Activated CD4-positive, alpha-beta T cell treated with anti-CD3 and anti-CD28 coated beads, Interleukin-2, amount 10 ng/mL, durations not matched to agents 7 days and 5 days (primary cell): ENCODE measurements at regions of chr22 and their contacts with region 1.

Region 1: DNA sequence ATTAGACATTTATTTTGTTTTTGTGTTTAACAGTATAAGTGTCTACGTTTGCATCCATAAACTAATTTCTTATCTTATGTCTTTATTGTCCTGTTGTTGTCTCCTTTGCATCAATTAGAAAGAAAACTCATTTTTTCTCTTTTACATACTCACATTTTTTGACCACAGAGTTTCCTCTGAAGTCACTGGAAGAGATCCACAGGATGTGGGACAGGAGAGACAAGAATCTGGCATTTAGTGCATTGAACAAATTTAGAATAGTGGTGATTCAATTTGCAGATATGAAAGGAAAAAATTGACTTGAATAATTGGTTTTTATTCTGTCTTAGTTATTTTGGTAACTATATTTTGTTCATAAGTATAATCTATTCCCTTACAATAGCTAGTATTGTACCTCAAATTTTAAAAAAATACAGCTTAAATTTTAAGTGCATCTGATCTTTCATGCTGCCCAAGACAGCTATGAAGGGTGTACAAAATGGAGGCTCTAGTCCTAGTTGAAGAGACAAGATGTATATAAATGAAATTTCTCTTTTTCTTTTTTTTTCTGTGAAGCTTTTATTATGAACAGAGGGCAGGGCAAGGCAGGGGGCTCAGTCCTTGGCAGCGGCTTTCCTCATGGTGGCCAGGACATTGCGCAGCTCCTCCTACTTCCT is 24.4 kb downstream of the HORMAD2 start:
- DNase-seq: peak; percentile 46
- H3K4me3 Mint-ChIP-seq: no peak overlapping the region
- H3K27ac Mint-ChIP-seq: peak overlapping the region; percentile 38
- H3K4me1 Mint-ChIP-seq: peaks cover 69% of the 10 kb centered on the region
- H3K27me3 Mint-ChIP-seq: no peaks in the 10 kb centered on the region

Region 2: GRCh38 chr22:30116362-30117117 is 11.9 kb after region 1 on chr22:
- CTCF ChIA-PET with region 1: interaction called, 12 read pairs
- POLR2A ChIA-PET with region 1: no interaction called
- DNase-seq: no peak
- H3K4me3 Mint-ChIP-seq: no peak overlapping the region
- H3K27ac Mint-ChIP-seq: no peak overlapping the region
- H3K4me1 Mint-ChIP-seq: peaks cover 37% of the 10 kb centered on the region
- H3K27me3 Mint-ChIP-seq: no peaks in the 10 kb centered on the region

Region 3: GRCh38 chr22:30245985-30246901 is 141.6 kb after region 1 on chr22 and contains the start of gene LIF:
- CTCF ChIA-PET with region 1: interaction called, 34 read pairs
- POLR2A ChIA-PET with region 1: no interaction called
- DNase-seq: peak; percentile 61
- H3K4me3 Mint-ChIP-seq: peak within 1 kb of the TSS; percentile 99
- H3K27ac Mint-ChIP-seq: peak within 1 kb of the TSS; percentile 99
- H3K4me1 Mint-ChIP-seq: peaks cover 80% of the 10 kb centered on the region
- H3K27me3 Mint-ChIP-seq: no peaks in the 10 kb centered on the region
- total RNA-seq, gene LIF: 102 to 103 TPM

Region 4: GRCh38 chr22:30253205-30253852 is 148.7 kb after region 1 on chr22:
- CTCF ChIA-PET with region 1: interaction called, 15 read pairs
- POLR2A ChIA-PET with region 1: no interaction called
- DNase-seq: no peak
- H3K4me3 Mint-ChIP-seq: no peak overlapping the region
- H3K27ac Mint-ChIP-seq: peak overlapping the region; percentile 64
- H3K4me1 Mint-ChIP-seq: peaks cover 70% of the 10 kb centered on the region
- H3K27me3 Mint-ChIP-seq: no peaks in the 10 kb centered on the region

Region 5: DNA sequence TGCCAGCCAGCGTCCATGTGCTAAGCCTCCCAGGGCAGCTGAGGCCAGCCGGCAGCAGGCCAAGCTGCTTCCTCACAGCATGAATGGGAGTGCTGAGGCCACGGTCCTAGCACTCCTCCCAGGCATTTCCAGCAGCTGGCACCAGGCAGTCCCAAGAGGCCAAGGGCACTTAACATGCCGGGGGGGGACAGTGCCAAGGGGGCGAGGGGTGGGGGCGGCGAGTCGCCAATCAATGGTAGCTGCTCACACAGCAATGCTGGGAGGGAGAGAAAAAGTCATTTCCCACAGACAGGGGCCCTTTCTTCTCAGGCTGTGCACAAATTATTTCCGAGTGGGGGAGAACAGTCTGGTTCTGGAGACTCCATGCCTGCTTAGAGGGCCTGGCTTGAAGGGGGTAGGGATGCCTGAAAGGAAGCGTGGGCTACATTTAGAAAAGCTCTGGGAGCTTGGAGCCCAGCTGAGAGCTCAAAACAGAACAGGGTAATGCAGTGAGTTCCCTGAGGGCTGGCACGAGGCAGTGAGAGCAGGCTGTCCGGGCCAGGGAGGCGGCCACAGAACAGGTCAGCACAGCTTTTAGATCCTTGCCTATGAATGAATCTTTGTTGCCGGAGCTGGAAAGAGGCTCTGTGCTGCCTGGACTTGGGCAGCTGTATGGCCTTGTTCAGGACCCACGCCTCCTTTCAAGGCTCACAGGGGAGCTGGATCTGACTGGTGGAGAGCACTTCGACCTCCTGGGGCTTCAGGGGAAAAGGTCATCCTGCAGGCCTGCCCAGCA is 236.5 kb after region 1 on chr22:
- CTCF ChIA-PET with region 1: interaction called, 10 read pairs
- POLR2A ChIA-PET with region 1: no interaction called
- DNase-seq: no peak
- H3K4me3 Mint-ChIP-seq: no peak overlapping the region
- H3K27ac Mint-ChIP-seq: no peak overlapping the region
- H3K4me1 Mint-ChIP-seq: peaks cover 8% of the 10 kb centered on the region
- H3K27me3 Mint-ChIP-seq: no peaks in the 10 kb centered on the region